Psoas muscle (tissue), 8 donors: ENCODE measurements at regions of chr11 and their contacts with region 1.

Region 1: GRCh38 chr11:20127671-20128527 is 32.4 kb downstream of the DBX1 start:
- DNase-seq: peak; percentile 73 to 86
- ATAC-seq: peak; percentile 79 to 96 (median 90)
- H3K4me3 ChIP-seq: no peak overlapping the region
- H3K27ac ChIP-seq: no peak overlapping the region
- H3K4me1 ChIP-seq: no peaks in the 10 kb centered on the region
- H3K27me3 ChIP-seq: no peaks in the 10 kb centered on the region
- CTCF ChIP-seq: peak; percentile 86

Region 2: GRCh38 chr11:20089796-20090653 is 37.9 kb before region 1 on chr11:
- intact Hi-C with region 1: no loop called
- DNase-seq: no peak
- ATAC-seq: no peak
- H3K4me3 ChIP-seq: no peak overlapping the region
- H3K27ac ChIP-seq: no peak overlapping the region
- H3K4me1 ChIP-seq: peaks cover 3% of the 10 kb centered on the region
- H3K27me3 ChIP-seq: no peaks in the 10 kb centered on the region
- CTCF ChIP-seq: no peak

Region 3: DNA sequence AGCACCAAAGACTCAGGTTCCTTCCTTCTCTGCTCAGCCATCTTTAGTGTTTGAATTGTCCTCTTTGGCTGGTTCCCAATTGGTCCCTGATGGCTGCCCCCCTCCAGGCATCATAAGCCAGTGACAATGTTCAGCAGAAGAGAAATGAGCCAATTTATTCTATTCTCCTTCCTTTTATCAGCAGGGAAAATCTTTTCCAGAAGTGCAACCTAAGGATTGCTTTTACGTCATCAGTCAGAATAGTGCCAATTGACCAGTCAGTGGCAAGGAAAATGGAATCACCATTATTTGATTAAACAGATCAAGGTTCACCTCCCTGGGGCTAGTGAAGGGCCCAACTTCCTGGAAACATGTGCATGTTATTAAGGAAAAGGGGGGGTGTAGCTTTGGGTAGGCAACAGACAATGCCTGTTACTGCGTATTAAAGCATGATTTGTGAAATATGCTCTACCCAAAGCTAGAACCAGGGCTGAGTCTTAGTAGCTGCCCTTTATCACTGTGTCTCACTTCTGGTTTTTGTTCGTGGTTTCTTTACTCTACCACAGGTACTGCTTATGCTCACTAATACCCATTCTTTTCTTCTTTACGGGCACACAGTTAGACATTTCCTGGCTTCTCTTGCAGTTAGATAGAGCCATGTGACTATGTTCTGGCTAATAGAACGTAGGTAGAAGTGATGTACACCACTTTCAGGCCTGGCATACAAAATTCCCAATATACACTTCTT is 45.0 kb after region 1 on chr11:
- intact Hi-C with region 1: no loop called
- DNase-seq: no peak
- ATAC-seq: no peak
- H3K4me3 ChIP-seq: no peak overlapping the region
- H3K27ac ChIP-seq: no peak overlapping the region
- H3K4me1 ChIP-seq: no peaks in the 10 kb centered on the region
- H3K27me3 ChIP-seq: peaks cover 0 to 6% (median 2%) of the 10 kb centered on the region in 3 donors
- CTCF ChIP-seq: no peak

Region 4: DNA sequence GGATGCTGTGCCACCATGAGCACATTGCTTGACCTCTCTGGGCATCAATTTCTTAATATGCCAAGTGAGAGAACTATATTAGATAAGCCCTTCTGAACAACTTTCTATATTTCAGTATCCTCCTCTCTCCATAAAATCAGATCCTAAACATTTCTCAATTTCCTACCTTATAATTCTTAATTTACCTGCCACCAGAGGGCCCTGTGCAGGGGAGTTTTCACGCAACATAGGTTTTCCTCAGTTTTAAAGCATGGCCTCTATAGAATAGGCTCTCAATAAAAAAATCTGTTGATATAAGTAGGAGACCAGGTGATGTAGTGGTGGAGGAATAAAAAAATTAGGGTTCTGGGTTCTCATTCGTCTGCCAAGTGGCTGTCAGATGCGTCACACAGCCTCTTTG is 116.1 kb after region 1 on chr11:
- intact Hi-C with region 1: no loop called
- DNase-seq: no peak
- ATAC-seq: no peak
- H3K4me3 ChIP-seq: no peak overlapping the region
- H3K27ac ChIP-seq: no peak overlapping the region
- H3K4me1 ChIP-seq: peaks cover under 1% of the 10 kb centered on the region
- H3K27me3 ChIP-seq: no peaks in the 10 kb centered on the region
- CTCF ChIP-seq: no peak

Region 5: GRCh38 chr11:20337526-20338154 is 209.7 kb after region 1 on chr11:
- intact Hi-C with region 1: loop called (anchors 5 kb)
- DNase-seq: no peak
- ATAC-seq: peak in 1 of 4 donors; percentile 50
- H3K4me3 ChIP-seq: no peak overlapping the region
- H3K27ac ChIP-seq: no peak overlapping the region
- H3K4me1 ChIP-seq: no peaks in the 10 kb centered on the region
- H3K27me3 ChIP-seq: peaks cover 0 to 7% (median 2%) of the 10 kb centered on the region in 3 donors
- CTCF ChIP-seq: peak; percentile 30

Region 6: GRCh38 chr11:20355221-20356219 is 227.6 kb after region 1 on chr11:
- intact Hi-C with region 1: loop called (anchors 2 kb)
- DNase-seq: no peak
- ATAC-seq: peak in 3 of 4 donors; percentile 61 to 73 (median 68)
- H3K4me3 ChIP-seq: no peak overlapping the region
- H3K27ac ChIP-seq: no peak overlapping the region
- H3K4me1 ChIP-seq: no peaks in the 10 kb centered on the region
- H3K27me3 ChIP-seq: no peaks in the 10 kb centered on the region
- CTCF ChIP-seq: peak; percentile 45

Region 7: DNA sequence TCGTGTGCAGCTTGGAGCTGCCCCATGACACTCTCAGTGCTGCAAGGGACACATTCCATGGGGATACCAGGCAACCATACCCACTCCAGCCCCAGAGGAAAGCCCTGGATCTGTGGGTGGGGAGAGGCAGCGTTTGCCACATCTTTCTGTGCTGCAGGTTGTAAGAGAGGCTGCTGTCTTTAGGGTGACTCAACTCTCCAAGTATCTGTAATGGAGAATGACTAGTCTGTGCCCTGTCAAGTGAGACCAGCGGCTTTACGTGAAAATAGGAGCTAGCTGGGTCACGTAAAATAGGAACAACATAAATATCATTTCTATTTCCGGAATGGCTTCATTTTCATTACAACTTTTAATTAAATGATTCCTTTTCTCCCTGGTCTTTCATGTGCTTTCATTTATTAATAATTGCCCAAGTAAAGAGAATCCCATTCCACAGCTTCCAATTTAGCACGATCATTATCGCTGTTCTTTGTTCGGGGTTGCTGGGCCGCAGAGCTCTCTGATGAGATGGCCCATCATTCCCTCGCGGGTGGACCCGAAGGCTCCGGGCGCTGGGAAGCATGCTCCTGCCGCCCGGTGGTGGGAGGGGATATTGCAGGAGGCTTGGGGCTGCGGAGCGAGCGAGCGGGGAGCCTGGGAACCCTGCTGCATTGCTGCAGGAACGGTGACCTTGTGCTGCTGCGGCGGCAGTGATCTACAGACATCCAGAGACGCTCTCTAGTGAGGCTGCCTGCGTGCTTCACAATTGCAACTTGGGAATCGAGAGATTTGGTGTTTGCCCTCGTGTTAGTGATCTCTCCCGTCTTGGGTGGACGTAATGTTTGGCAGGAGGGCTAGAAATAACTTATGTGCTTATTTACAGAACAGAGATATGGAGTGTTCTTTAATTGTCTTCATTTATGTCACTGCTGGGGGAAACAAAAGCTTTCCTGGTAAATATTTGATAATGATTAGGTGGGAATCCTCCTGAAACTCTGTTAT is 482.1 kb after region 1 on chr11:
- intact Hi-C with region 1: loop called (anchors 2 to 5 kb)
- DNase-seq: peak; percentile 67 to 73
- ATAC-seq: peak; percentile 89 to 95 (median 92)
- H3K4me3 ChIP-seq: no peak overlapping the region
- H3K27ac ChIP-seq: no peak overlapping the region
- H3K4me1 ChIP-seq: no peaks in the 10 kb centered on the region
- H3K27me3 ChIP-seq: peaks cover 0 to 66% (median 13%) of the 10 kb centered on the region in 3 donors
- CTCF ChIP-seq: peak; percentile 92